BJ (cell line): ENCODE measurements at regions of chr17 and their contacts with region 1.

Region 1: GRCh38 chr17:60142872-60143499 is 6.8 kb upstream of the CA4 start:
- DNase-seq: peak; percentile 52
- H3K4me3 ChIP-seq: no peak overlapping the region
- H3K27me3 ChIP-seq: peaks cover 21% of the 10 kb centered on the region
- CTCF ChIP-seq: peak; percentile 90

Region 2: DNA sequence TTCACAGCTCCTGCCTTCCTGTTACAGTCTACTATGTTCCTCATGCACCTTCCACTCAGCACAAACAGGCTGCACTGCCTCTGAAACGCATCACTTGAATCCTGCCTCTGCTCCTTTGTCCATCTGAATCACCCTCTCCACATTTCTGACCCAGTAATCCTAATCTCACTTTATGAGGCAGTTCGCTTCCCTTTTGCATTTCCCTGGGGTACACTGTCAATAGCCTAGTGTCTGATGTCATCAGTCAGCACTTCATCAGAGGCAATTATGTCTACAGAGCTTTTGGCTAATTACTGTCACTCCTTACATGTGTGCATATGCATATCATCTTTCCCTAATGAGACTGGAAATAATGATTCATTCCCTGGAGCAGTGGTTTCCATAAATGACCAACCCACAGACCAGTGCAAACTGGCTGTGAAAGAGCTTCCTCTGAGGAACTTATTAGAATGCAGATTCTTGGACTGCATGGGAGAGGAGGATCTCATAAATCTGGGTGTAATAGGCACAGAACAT is 30.4 kb after region 1 on chr17:
- CTCF ChIA-PET with region 1: interaction called, 17 read pairs
- POLR2A ChIA-PET with region 1: no interaction called
- DNase-seq: peak; percentile 9
- H3K4me3 ChIP-seq: no peak overlapping the region
- H3K27me3 ChIP-seq: no peaks in the 10 kb centered on the region
- CTCF ChIP-seq: no peak

Region 3: DNA sequence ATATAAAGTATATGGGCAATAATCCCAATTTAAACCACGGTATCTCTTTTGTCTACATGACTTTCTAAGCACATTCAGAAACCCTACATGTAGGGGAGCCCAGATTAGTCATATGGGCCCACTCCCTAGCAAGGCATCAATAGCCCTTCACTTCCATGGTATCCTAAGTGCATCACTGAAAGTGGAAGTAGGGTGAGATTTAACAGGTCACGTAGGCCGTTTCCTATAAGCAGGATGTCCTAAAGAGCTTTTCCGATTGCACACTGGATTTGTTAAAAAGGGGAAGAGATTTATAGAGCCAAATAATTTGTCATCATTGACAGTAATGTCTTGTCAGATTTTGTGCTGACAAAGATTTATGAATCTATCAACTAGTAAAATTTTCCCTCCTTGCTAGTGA is 45.8 kb after region 1 on chr17:
- CTCF ChIA-PET with region 1: no interaction called
- POLR2A ChIA-PET with region 1: no interaction called
- DNase-seq: no peak
- H3K4me3 ChIP-seq: no peak overlapping the region
- H3K27me3 ChIP-seq: no peaks in the 10 kb centered on the region
- CTCF ChIP-seq: no peak

Region 4: DNA sequence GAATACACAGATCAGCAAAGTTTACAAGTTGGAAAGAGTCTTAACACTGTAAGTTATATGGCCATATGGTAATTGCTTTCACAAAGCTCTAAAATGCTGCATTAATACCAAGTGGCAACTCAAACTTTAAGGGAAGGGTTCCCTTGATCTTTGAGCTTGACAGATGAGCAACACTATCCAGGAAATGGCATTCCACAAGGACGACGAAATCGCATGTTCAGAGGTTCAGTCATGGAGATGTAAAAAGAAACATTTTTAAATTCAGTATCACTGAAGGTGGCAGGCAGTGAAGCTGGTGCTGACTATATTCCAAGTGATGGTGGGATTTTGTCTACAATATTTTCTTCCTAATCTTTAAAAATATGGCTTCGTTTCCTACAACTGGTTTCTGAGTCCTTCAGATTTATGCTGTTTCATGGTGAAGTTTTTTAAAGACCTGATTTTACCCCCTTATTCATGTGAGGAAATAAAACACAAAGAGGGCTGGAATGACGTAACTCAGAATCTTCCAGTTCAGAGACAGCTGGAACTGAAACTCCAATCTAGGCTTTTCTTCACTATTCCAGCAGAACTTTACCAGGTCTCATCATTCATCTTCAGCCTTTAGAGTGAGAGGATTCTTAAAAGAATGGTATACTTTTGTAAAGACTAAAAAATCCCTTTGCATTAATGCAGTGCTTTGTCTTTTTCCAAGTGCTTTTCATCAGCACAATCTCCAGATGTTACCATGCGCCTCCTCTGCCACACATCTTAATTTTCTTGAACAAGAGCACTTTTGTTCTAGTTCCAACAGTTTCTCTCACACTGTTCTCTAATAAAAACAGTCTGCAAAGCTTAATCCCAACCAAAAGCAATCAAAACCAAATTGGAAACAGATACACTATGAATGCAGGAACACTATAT is 299.5 kb after region 1 on chr17:
- CTCF ChIA-PET with region 1: interaction called, 11 read pairs
- POLR2A ChIA-PET with region 1: no interaction called
- DNase-seq: no peak
- H3K4me3 ChIP-seq: no peak overlapping the region
- H3K27me3 ChIP-seq: no peaks in the 10 kb centered on the region
- CTCF ChIP-seq: no peak

Region 5: GRCh38 chr17:60610473-60610872 is 467.5 kb after region 1 on chr17:
- CTCF ChIA-PET with region 1: no interaction called
- POLR2A ChIA-PET with region 1: no interaction called
- DNase-seq: no peak
- H3K4me3 ChIP-seq: no peak overlapping the region
- H3K27me3 ChIP-seq: no peaks in the 10 kb centered on the region
- CTCF ChIP-seq: no peak